ENCODE measurements at regions of chr1 and their contacts with region 1.

Region 1: DNA sequence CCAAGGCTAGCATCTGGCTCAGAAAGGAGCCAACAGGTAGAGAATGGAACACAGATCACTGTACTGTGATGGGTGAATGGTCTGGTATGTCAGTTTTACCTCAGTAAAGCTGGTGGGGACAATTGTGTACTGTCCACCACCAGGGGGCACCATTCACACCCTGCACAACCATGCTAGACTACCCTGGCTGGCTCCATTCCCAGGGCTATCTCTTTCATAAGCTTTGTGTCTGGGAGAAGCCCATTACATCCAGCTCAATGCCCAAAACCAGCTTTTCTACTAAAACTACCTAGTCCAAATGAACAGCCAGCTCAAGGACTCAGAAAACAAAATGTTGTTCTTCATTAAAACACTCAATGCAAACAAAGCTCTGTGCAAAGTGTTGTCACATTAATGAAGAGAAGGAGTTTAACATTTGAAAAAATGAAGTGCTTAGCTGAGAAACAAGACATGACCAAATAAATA is 62.0 kb upstream of the RASAL2 start:
- DNase-seq: peak; percentile 78
- CTCF ChIP-seq: peak; percentile 48

Region 2: GRCh38 chr1:177975588-177976495 is 56.0 kb before region 1 on chr1:
- in situ Hi-C with region 1: no loop called
- DNase-seq: no peak
- CTCF ChIP-seq: no peak

Region 3: GRCh38 chr1:178126790-178127189 is 94.9 kb after region 1 on chr1:
- in situ Hi-C with region 1: no loop called
- DNase-seq: no peak
- CTCF ChIP-seq: no peak

Region 4: GRCh38 chr1:178189814-178190213 is 157.9 kb after region 1 on chr1:
- in situ Hi-C with region 1: loop called (anchors 25 kb)
- DNase-seq: peak; percentile 34
- CTCF ChIP-seq: peak; percentile 63